GM12878 (cell line): ENCODE measurements at regions of chr2 and their contacts with region 1.

Region 1: GRCh38 chr2:219736209-219736608 is 108.8 kb downstream of the SLC4A3 start:
- DNase-seq: no peak
- ATAC-seq: peak; percentile 40; the same call in 2 of the 3 replicates
- H3K4me3 ChIP-seq: no peak overlapping the region
- H3K27ac ChIP-seq: no peak overlapping the region
- H3K4me1 ChIP-seq: no peaks in the 10 kb centered on the region
- H3K27me3 ChIP-seq: no peaks in the 10 kb centered on the region; a peak in 1 of 4 replicates
- CTCF ChIP-seq: peak; percentile 20 to 52 (median 41); a peak in 3 of 6 replicates
- EP300 ChIP-seq: no peak
- POLR2A ChIP-seq: no peak
- RAD21 ChIP-seq: peak; percentile 66

Region 2: DNA sequence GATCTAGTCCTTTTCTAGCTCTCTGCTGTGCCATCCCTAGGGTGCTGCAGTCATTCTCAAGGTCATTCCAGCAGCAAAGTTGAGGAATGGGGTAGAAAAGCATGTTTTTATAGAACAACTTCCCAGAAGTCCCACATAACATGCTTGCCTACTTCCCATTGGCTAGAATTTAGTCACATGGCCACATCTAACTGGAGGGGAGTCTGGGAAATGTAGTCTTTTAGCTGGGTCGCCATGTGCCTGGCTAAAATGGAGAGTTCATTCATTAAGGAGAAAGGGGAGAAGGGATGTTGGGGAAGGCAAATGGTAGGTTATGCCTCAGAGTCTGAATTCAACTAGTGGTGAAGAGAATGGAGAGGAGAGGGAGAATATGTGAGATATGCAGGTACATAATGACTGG is 23.1 kb before region 1 on chr2:
- CTCF ChIA-PET with region 1: no interaction called
- POLR2A ChIA-PET with region 1: no interaction called
- RAD21 ChIA-PET with region 1: no interaction called
- SMC1A ChIA-PET with region 1: no interaction called
- in situ Hi-C with region 1: no loop called
- intact Hi-C with region 1: no loop called
- DNase-seq: no peak
- ATAC-seq: peak; percentile 70
- H3K4me3 ChIP-seq: no peak overlapping the region
- H3K27ac ChIP-seq: no peak overlapping the region
- H3K4me1 ChIP-seq: no peaks in the 10 kb centered on the region
- H3K27me3 ChIP-seq: no peaks in the 10 kb centered on the region
- CTCF ChIP-seq: no peak
- EP300 ChIP-seq: no peak
- POLR2A ChIP-seq: no peak
- RAD21 ChIP-seq: no peak

Region 3: DNA sequence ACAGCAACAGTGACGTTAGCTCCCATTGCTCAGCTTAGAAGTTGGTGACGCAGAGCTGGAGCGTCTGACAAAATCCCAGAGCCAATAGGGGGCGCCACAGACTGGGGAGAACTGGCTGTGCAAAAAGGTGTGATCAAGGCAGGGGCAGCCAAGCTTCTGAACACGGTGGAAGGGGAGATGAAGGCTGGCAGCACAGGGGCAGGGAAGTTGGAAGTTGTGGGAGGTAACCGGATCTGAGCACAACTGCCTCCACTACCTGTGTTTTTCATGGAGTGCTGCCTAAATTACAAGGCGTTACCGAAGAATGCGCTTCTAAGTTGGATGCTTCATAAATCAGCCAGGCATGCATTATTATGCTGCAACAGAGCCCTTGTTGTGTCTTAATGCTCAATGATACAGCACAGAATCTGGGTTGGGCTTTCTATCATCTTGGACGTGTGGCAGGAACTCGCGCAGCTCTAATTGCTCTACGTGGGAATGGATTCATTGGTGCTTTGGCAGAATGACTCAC is 261.2 kb after region 1 on chr2:
- CTCF ChIA-PET with region 1: interaction called, 3 read pairs
- POLR2A ChIA-PET with region 1: no interaction called
- RAD21 ChIA-PET with region 1: no interaction called
- SMC1A ChIA-PET with region 1: interaction called, 3 read pairs
- in situ Hi-C with region 1: no loop called
- intact Hi-C with region 1: loop called (anchors 2 kb)
- DNase-seq: no peak
- ATAC-seq: peak; percentile 59
- H3K4me3 ChIP-seq: no peak overlapping the region
- H3K27ac ChIP-seq: no peak overlapping the region
- H3K4me1 ChIP-seq: no peaks in the 10 kb centered on the region
- H3K27me3 ChIP-seq: peaks cover 2 to 4% of the 10 kb centered on the region in 2 experiments; a peak in 3 of 4 replicates
- CTCF ChIP-seq: peak; percentile 29 to 49 (median 32); a peak in 2 of 6 replicates
- EP300 ChIP-seq: no peak
- POLR2A ChIP-seq: no peak
- RAD21 ChIP-seq: peak; percentile 47